AG04449 (cell line): ENCODE measurements at regions of chr3 and their contacts with region 1.

Region 1: GRCh38 chr3:73547427-73548248 is 77.1 kb downstream of the PDZRN3 start:
- DNase-seq: peak; percentile 91
- H3K4me3 ChIP-seq: peak overlapping the region; percentile 25; the same call in 1 of the 2 replicates
- CTCF ChIP-seq: no peak

Region 2: DNA sequence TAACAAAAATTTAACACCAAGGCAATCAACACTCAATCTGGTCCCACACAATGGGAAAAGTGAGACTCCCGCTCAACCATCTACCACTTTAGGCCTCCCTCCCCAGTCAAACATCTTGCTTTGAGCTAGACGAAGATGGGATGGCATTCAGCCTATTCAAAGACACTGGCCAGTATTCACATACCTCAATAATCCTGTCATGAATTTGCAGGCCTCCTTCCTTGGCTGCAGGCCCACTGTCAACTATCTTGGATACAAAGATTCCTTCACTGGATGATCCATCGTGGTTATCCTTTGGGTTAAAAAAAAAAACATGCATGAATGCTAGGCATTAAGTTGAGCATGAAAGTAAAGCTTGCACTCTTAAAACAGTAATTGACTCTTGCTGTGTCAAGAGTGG is 54.5 kb after region 1 on chr3:
- CTCF ChIA-PET with region 1: interaction called, 3 read pairs
- POLR2A ChIA-PET with region 1: interaction called, 24 read pairs
- DNase-seq: peak; percentile 91
- H3K4me3 ChIP-seq: no peak overlapping the region
- CTCF ChIP-seq: no peak

Region 3: DNA sequence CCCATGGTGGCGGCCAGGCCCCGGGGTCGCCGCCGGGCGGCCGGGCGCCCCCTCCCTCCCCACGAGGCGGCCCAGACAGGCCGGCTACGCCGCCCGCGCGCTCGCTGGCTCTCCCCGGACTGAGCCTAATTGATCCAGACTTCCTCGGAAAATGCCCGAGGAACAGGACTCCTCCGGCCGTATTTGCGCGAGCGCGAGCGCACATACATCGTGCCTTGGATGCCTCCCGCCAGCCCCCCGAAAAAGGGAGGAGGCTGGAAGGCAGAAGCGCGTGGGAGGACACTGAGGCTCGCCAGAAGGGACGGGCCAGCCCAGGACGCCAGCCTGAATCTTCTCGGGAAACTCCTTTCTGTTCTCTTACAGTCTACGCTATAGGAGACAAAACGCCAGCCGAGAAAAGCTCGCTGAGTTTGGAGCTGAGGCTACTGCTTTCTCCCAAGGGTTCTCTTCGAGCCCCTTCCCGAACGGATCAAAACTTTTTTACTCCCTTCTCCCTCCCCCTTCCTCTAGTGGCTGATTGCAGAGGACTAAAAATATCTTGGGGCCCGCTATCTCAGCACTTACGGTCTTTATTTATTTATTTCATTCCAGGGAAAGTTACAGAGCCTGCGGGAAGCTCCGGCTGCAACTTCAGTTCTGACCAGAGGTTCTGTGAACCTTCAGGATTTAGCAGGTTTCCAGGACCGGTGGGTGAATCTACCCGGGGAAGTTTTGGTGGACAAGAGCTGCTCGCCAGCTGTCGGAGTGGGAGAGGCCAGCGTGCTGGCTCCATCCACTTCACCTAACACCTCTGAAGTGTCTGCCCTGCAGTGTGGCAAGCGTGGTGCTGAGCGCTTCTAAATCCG is 77.4 kb after region 1 on chr3 and contains the start of gene PDZRN3:
- CTCF ChIA-PET with region 1: interaction called, 8 read pairs
- POLR2A ChIA-PET with region 1: interaction called, 15 read pairs
- DNase-seq: no peak
- H3K4me3 ChIP-seq: peak within 1 kb of the TSS; percentile 80
- CTCF ChIP-seq: no peak